ENCODE measurements at regions of chr15 and their contacts with region 1.

Region 1: DNA sequence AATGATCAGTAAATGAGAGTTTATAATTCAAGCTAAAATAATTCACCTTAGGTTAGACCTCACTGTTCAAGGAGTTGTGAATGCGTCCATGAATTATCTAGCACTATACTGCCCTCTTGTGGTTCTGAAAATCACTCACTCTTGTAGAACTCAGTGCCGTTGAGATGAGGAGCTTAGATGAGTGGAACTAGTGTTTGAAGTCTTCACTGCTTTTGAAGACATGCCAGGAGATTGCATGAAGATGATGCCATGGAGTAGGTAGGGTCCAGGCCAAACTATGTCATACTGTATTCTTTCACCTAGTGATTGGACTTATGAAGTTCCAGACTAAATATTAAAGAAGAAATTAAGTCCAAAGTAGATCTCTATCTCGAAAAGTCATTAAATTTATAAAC is 28.8 kb downstream of the LYSMD4 start:
- DNase-seq: peak; percentile 84
- ATAC-seq: peak; percentile 97
- H3K4me3 ChIP-seq: no peak overlapping the region
- H3K27ac ChIP-seq: peak overlapping the region; percentile 72; the same call in 1 of the 2 replicates
- H3K4me1 ChIP-seq: peaks cover 15% of the 10 kb centered on the region; the same call in 1 of the 2 replicates
- H3K27me3 ChIP-seq: no peaks in the 10 kb centered on the region
- CTCF ChIP-seq: peak; percentile 67

Region 2: GRCh38 chr15:99275061-99275460 is 429.4 kb before region 1 on chr15:
- CTCF ChIA-PET with region 1: interaction called, 27 read pairs
- POLR2A ChIA-PET with region 1: no interaction called
- in situ Hi-C with region 1: no loop called
- intact Hi-C with region 1: loop called (anchors 5 kb)
- DNase-seq: no peak
- ATAC-seq: no peak
- H3K4me3 ChIP-seq: no peak overlapping the region
- H3K27ac ChIP-seq: no peak overlapping the region
- H3K4me1 ChIP-seq: no peaks in the 10 kb centered on the region
- H3K27me3 ChIP-seq: no peaks in the 10 kb centered on the region
- CTCF ChIP-seq: no peak

Region 3: DNA sequence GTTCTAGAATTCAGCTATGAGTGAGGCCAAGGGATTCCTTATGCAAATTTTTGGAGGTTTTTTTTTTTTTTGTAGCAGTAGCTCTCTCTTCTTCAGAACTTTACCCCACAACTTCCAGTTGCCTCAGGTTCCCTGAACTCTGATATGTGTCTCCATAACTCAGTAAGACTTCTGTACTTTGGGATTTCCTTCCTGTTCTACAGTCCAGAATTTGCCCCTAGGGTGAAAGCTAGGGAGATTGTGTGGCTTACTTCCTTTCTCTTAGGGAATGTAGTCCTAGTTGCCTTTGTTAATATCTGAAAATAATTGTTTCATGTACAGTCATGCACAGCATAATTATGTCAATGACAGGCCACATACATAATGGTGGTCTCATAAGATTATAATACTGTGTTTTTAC is 422.3 kb before region 1 on chr15:
- CTCF ChIA-PET with region 1: interaction called, 9 read pairs
- POLR2A ChIA-PET with region 1: no interaction called
- in situ Hi-C with region 1: no loop called
- intact Hi-C with region 1: loop called (anchors 2 kb)
- DNase-seq: no peak
- ATAC-seq: no peak
- H3K4me3 ChIP-seq: no peak overlapping the region
- H3K27ac ChIP-seq: no peak overlapping the region
- H3K4me1 ChIP-seq: no peaks in the 10 kb centered on the region
- H3K27me3 ChIP-seq: no peaks in the 10 kb centered on the region
- CTCF ChIP-seq: no peak

Region 4: GRCh38 chr15:99409097-99409473 is 295.4 kb before region 1 on chr15:
- CTCF ChIA-PET with region 1: interaction called, 14 read pairs
- POLR2A ChIA-PET with region 1: no interaction called
- in situ Hi-C with region 1: no loop called
- intact Hi-C with region 1: loop called (anchors 10 kb)
- DNase-seq: peak; percentile 13
- ATAC-seq: peak; percentile 93
- H3K4me3 ChIP-seq: no peak overlapping the region
- H3K27ac ChIP-seq: no peak overlapping the region
- H3K4me1 ChIP-seq: no peaks in the 10 kb centered on the region
- H3K27me3 ChIP-seq: no peaks in the 10 kb centered on the region
- CTCF ChIP-seq: peak; percentile 86

Region 5: DNA sequence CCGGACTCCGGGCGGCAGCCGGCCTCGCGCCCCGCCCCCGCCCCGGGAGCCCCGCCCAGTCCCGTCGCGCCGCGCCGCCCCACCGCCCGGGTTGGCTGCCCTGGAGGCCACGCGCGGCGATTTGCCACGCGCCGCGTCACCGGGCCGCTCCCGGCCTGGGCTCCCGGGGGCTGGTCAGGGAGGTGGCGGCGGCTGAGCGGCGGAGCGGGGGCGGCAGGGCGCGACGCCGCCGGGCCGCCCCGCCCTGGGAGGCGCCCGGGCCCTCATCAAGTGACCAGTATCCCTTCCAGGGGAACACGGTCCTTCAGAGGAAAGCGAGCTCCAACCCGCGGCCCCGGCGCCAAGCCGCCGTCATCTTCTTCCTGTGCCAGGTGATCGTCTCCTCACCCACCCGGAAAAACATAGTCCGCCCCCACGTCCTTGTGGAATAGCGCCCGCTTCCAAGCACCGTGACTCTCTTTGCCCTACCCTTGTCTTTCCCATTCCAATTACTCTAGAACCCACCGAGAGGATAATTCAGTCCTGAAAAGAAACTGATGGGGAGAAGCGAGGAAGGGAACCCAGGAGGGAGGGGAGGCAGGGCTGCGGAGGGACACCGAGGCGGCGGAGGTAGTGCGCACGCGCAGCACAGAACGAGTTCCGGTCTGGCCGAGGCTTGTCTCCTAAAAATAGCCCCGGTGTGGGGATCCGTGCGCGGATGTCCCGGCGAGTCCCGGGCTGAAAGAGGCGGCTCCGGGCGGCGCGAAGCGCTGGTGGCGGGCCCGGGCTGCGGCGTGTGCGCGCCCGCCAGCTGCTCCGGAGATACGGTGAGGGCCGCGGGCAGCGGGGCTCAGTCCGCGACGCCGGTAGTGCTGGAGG is 138.9 kb before region 1 on chr15 and contains the start of gene MEF2A:
- CTCF ChIA-PET with region 1: interaction called, 4 read pairs
- POLR2A ChIA-PET with region 1: no interaction called
- in situ Hi-C with region 1: no loop called
- intact Hi-C with region 1: loop called (anchors 5 kb)
- DNase-seq: peak; percentile 57
- ATAC-seq: peak; percentile 88
- H3K4me3 ChIP-seq: peak within 1 kb of the TSS; percentile 69 to 96
- H3K27ac ChIP-seq: peak within 1 kb of the TSS; percentile 97
- H3K4me1 ChIP-seq: peaks cover 13% of the 10 kb centered on the region
- H3K27me3 ChIP-seq: no peaks in the 10 kb centered on the region
- CTCF ChIP-seq: no peak
- total RNA-seq, gene MEF2A: 31.1 TPM

Region 6: DNA sequence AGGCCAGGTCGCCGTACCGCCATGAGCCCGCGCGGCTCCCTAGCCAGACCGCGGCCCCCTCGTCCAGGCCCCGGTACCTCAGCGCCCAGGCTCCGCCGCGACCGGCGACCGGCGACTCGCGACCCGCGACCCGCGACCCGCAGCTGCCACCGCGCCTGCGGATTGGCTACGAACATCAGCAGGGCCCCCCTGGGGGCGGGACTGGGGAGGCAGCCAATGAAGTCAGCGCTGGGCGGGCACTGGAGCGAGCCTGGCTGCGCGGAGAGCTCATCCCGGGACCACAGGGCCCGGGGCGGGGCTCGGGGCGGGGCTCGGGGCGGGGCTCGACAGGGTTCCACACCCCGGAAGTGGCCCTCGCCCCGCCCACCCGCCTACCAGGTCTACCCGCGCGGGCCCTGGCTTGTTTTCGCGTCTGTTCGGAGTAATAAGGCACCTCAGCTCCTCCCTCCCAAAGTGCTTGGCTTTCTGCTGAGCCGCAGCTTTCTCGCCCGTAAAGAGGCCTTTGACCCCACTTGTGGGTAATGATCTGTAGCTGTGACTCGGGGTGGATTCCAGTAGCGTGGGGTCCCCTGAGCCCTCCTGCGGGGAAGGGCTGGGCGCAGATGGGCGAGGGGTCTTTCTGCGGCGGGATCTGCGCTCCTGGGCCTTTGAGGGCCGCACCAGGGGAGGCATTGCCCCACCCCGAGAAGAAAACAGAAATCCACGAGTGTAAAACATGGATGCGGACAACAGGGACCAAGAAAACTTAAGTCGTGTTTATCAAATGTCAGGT is 29.0 kb after region 1 on chr15 and contains the start of gene LYSMD4:
- CTCF ChIA-PET with region 1: interaction called, 14 read pairs
- POLR2A ChIA-PET with region 1: interaction called, 3 read pairs
- in situ Hi-C with region 1: no loop called
- intact Hi-C with region 1: no loop called
- DNase-seq: peak; percentile 60
- ATAC-seq: peak; percentile 99
- H3K4me3 ChIP-seq: peak within 1 kb of the TSS; percentile 72 to 93
- H3K27ac ChIP-seq: peak within 1 kb of the TSS; percentile 86
- H3K4me1 ChIP-seq: peaks cover 5% of the 10 kb centered on the region; the same call in 1 of the 2 replicates
- H3K27me3 ChIP-seq: no peaks in the 10 kb centered on the region
- CTCF ChIP-seq: no peak
- total RNA-seq, gene LYSMD4: 8.9 TPM

Measured in Panc1 (cell line).